ENCODE measurements at regions of chr22 and their contacts with region 1.

Region 1: GRCh38 chr22:33519071-33519973 is 401.0 kb downstream of the LARGE1 start:
- DNase-seq: peak; percentile 36 to 67 (median 46)
- H3K4me3 ChIP-seq: no peak overlapping the region
- H3K27ac ChIP-seq: peak overlapping the region in 1 of 2 donors; percentile 8
- H3K4me1 ChIP-seq: no peaks in the 10 kb centered on the region
- H3K27me3 ChIP-seq: no peaks in the 10 kb centered on the region
- CTCF ChIP-seq: peak; percentile 54 to 66 (median 64)
- EP300 ChIP-seq: no peak
- POLR2A ChIP-seq: no peak

Region 2: GRCh38 chr22:33535937-33536875 is 16.9 kb after region 1 on chr22:
- intact Hi-C with region 1: loop called in 1 of 4 experiments (anchors 1 kb)
- DNase-seq: no peak
- H3K4me3 ChIP-seq: no peak overlapping the region
- H3K27ac ChIP-seq: no peak overlapping the region
- H3K4me1 ChIP-seq: peaks cover 22% of the 10 kb centered on the region
- H3K27me3 ChIP-seq: no peaks in the 10 kb centered on the region
- CTCF ChIP-seq: no peak
- EP300 ChIP-seq: no peak
- POLR2A ChIP-seq: no peak

Region 3: GRCh38 chr22:33697640-33698039 is 178.3 kb after region 1 on chr22:
- intact Hi-C with region 1: no loop called
- DNase-seq: no peak
- H3K4me3 ChIP-seq: no peak overlapping the region
- H3K27ac ChIP-seq: no peak overlapping the region
- H3K4me1 ChIP-seq: no peaks in the 10 kb centered on the region
- H3K27me3 ChIP-seq: no peaks in the 10 kb centered on the region
- CTCF ChIP-seq: no peak
- EP300 ChIP-seq: no peak
- POLR2A ChIP-seq: no peak

Region 4: DNA sequence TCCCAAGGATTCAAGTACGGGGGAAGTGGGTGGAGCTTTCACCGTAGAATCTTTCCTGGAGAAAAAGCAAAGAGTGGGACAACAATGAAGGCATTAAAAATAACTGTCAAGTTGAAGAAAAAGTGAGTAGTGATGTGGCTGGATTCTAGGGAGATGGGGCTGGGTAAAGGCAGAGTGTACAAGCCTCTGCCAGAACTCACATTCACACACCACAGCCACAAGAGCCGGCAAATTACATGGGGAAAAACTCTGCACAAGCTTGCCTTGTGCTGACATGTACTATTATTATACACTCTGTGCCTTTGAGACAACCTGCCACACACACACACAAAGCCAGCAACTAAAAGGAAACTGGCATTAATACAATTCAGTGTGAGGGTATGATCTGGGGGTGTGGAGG is 218.3 kb after region 1 on chr22:
- intact Hi-C with region 1: no loop called
- DNase-seq: no peak
- H3K4me3 ChIP-seq: no peak overlapping the region
- H3K27ac ChIP-seq: no peak overlapping the region
- H3K4me1 ChIP-seq: no peaks in the 10 kb centered on the region
- H3K27me3 ChIP-seq: no peaks in the 10 kb centered on the region
- CTCF ChIP-seq: no peak
- EP300 ChIP-seq: no peak
- POLR2A ChIP-seq: no peak

Region 5: GRCh38 chr22:34105461-34106062 is 586.2 kb after region 1 on chr22:
- intact Hi-C with region 1: loop called in 2 of 4 experiments (anchors 5 kb)
- DNase-seq: peak; percentile 9 to 57 (median 44)
- H3K4me3 ChIP-seq: no peak overlapping the region
- H3K27ac ChIP-seq: no peak overlapping the region
- H3K4me1 ChIP-seq: no peaks in the 10 kb centered on the region
- H3K27me3 ChIP-seq: no peaks in the 10 kb centered on the region
- CTCF ChIP-seq: peak in 1 of 3 donors; percentile 16
- EP300 ChIP-seq: no peak
- POLR2A ChIP-seq: no peak

Measured in ovary (tissue), 10 donors.